ENCODE measurements at regions of chr19 and their contacts with region 1.

Region 1: GRCh38 chr19:40221858-40222837 is 4.0 kb upstream of the TTC9B start:
- DNase-seq: peak; percentile 82
- H3K4me3 ChIP-seq: no peak overlapping the region
- H3K27ac ChIP-seq: no peak overlapping the region
- H3K4me1 ChIP-seq: peaks cover 7 to 29% (median 25%) of the 10 kb centered on the region in 4 donors
- H3K27me3 ChIP-seq: peaks cover 87% of the 10 kb centered on the region
- CTCF ChIP-seq: peak; percentile 87 to 96 (median 92)
- EP300 ChIP-seq: no peak
- POLR2A ChIP-seq: no peak

Region 2: GRCh38 chr19:40191836-40192646 is 30.1 kb before region 1 on chr19:
- in situ Hi-C with region 1: no loop called
- intact Hi-C with region 1: loop called (anchors 2 kb)
- DNase-seq: peak; percentile 37
- H3K4me3 ChIP-seq: peak overlapping the region; percentile 77 to 95 (median 92)
- H3K27ac ChIP-seq: peak overlapping the region; percentile 95 to 99 (median 98)
- H3K4me1 ChIP-seq: peaks cover 6 to 26% (median 16%) of the 10 kb centered on the region in 4 donors
- H3K27me3 ChIP-seq: no peaks in the 10 kb centered on the region
- CTCF ChIP-seq: no peak
- EP300 ChIP-seq: no peak
- POLR2A ChIP-seq: no peak

Region 3: DNA sequence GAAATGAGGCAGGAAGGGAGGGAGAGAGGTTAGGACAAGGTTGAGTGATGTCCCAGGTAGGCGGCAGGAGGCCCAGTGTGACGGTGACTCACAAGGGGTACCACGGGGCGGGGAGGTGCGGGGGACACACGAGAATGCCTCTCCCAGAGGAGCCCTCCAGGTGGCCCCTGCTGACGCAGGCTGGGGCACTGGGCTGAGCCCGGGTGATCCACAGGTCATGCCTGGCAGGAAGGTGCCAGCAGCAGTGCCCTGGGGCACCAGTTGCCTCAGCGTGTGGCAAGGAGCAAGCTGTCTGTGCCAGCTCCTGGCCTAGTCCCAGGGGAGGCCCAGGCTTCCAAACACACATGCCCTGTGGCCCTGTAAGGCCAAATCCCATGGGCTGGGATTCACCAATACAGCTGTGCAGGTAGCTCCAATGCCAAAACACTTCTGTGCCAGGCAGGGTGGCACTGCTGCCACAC is 34.9 kb after region 1 on chr19:
- in situ Hi-C with region 1: no loop called
- intact Hi-C with region 1: no loop called
- DNase-seq: no peak
- H3K4me3 ChIP-seq: no peak overlapping the region
- H3K27ac ChIP-seq: no peak overlapping the region
- H3K4me1 ChIP-seq: no peaks in the 10 kb centered on the region
- H3K27me3 ChIP-seq: no peaks in the 10 kb centered on the region
- CTCF ChIP-seq: no peak
- EP300 ChIP-seq: no peak
- POLR2A ChIP-seq: no peak

Measured in transverse colon (tissue), 4 donors.